ENCODE measurements at regions of chr16 and their contacts with region 1.

Region 1: GRCh38 chr16:3029537-3030402 is 5.9 kb downstream of the THOC6 start:
- DNase-seq: peak; percentile 75
- H3K4me3 Mint-ChIP-seq: peak overlapping the region; percentile 77
- H3K27ac Mint-ChIP-seq: no peak overlapping the region
- H3K4me1 Mint-ChIP-seq: peaks cover 61% of the 10 kb centered on the region
- H3K27me3 Mint-ChIP-seq: peaks cover 68% of the 10 kb centered on the region

Region 2: GRCh38 chr16:3045357-3045728 is 15.6 kb after region 1 on chr16:
- CTCF ChIA-PET with region 1: interaction called, 80 read pairs
- DNase-seq: peak; percentile 72
- H3K4me3 Mint-ChIP-seq: peak overlapping the region; percentile 83
- H3K27ac Mint-ChIP-seq: peak overlapping the region; percentile 82
- H3K4me1 Mint-ChIP-seq: peaks cover 51% of the 10 kb centered on the region
- H3K27me3 Mint-ChIP-seq: peaks cover 85% of the 10 kb centered on the region

Region 3: GRCh38 chr16:3173892-3174617 is 144.3 kb after region 1 on chr16:
- CTCF ChIA-PET with region 1: interaction called, 10 read pairs
- DNase-seq: peak; percentile 36
- H3K4me3 Mint-ChIP-seq: peak overlapping the region; percentile 26
- H3K27ac Mint-ChIP-seq: peak overlapping the region; percentile 55
- H3K4me1 Mint-ChIP-seq: peaks cover 43% of the 10 kb centered on the region
- H3K27me3 Mint-ChIP-seq: peaks cover 99% of the 10 kb centered on the region

Region 4: DNA sequence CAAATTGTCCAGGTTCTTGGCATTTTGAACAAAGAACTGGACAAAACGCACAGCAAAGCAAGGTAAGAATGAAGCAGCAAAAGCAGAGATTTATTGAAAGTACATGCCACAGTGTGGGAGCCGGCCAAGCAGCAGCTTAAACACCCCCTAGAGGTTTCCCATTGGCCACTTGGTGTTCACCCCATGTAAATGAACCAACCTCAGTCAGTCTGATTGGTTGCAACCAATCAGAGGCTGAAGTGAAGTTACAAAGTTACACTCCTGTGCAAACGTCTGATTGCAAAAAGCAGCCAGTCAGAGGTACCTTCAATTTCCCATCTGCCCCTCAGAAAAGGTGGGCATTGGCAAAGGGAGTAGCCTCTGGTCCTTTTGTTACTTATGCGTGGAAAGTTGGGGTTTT is 244.7 kb after region 1 on chr16:
- CTCF ChIA-PET with region 1: no interaction called
- DNase-seq: no peak
- H3K4me3 Mint-ChIP-seq: no peak overlapping the region
- H3K27ac Mint-ChIP-seq: no peak overlapping the region
- H3K4me1 Mint-ChIP-seq: no peaks in the 10 kb centered on the region
- H3K27me3 Mint-ChIP-seq: peaks cover 35% of the 10 kb centered on the region